H1 (cell line): ENCODE measurements at regions of chr1 and their contacts with region 1.

Region 1: DNA sequence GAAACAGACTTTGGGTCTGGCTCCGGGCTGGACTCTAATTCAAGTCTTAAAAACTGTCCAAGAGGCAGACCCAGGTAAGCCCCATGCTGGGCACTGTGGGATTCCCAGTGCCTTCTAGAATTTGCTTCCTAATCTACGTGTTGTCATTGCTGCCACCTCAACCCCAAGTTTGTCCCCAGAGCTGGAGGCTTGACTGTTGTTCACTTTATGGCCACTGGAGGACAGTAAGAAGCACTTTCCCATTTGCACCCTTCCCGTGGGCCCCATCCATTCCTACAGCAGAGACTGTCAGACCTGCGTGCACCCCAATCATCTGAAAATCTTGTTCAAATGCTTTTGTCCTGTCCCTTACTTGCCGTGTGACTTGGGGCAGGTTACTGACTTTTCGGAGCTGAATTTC is 29.4 kb upstream of the VASH2 start:
- DNase-seq: peak in 1 of 2 experiments; percentile 51
- H3K4me3 ChIP-seq: no peak overlapping the region
- H3K27ac ChIP-seq: no peak overlapping the region
- H3K4me1 ChIP-seq: peaks cover 1 to 15% (median 10%) of the 10 kb centered on the region in 4 experiments
- H3K27me3 ChIP-seq: no peaks in the 10 kb centered on the region
- CTCF ChIP-seq: peak; percentile 52 to 78 (median 58)
- EP300 ChIP-seq: no peak
- POLR2A ChIP-seq: no peak
- RAD21 ChIP-seq: peak; percentile 59 to 70

Region 2: GRCh38 chr1:212899845-212900244 is 21.1 kb before region 1 on chr1:
- CTCF ChIA-PET with region 1: interaction called, 11 read pairs
- POLR2A ChIA-PET with region 1: interaction called, 94 read pairs
- DNase-seq: no peak
- H3K4me3 ChIP-seq: no peak overlapping the region
- H3K27ac ChIP-seq: peak overlapping the region; percentile 8; the same call in 1 of the 2 replicates
- H3K4me1 ChIP-seq: peaks cover 3 to 9% (median 4%) of the 10 kb centered on the region in 4 experiments; a peak in 5 of 7 replicates
- H3K27me3 ChIP-seq: no peaks in the 10 kb centered on the region
- CTCF ChIP-seq: no peak
- EP300 ChIP-seq: no peak
- POLR2A ChIP-seq: no peak; a peak in 1 of 3 replicates
- RAD21 ChIP-seq: no peak

Region 3: GRCh38 chr1:212909652-212910063 is 11.2 kb before region 1 on chr1:
- CTCF ChIA-PET with region 1: interaction called, 6 read pairs
- POLR2A ChIA-PET with region 1: interaction called, 40 read pairs
- DNase-seq: peak in 1 of 2 experiments; percentile 73
- H3K4me3 ChIP-seq: peak overlapping the region in 3 of 4 experiments; percentile 3 to 49 (median 13); a peak in 4 of 8 replicates
- H3K27ac ChIP-seq: peak overlapping the region; percentile 91
- H3K4me1 ChIP-seq: peaks cover 5 to 18% (median 14%) of the 10 kb centered on the region in 4 experiments; a peak in 6 of 7 replicates
- H3K27me3 ChIP-seq: no peaks in the 10 kb centered on the region
- CTCF ChIP-seq: no peak
- EP300 ChIP-seq: no peak
- POLR2A ChIP-seq: peak in 1 of 2 experiments; percentile 44; a peak in 1 of 3 replicates
- RAD21 ChIP-seq: no peak

Region 4: GRCh38 chr1:212933815-212934471 is 13.0 kb after region 1 on chr1:
- CTCF ChIA-PET with region 1: interaction called, 10 read pairs
- POLR2A ChIA-PET with region 1: interaction called, 17 read pairs
- DNase-seq: peak in 1 of 2 experiments; percentile 39
- H3K4me3 ChIP-seq: no peak overlapping the region
- H3K27ac ChIP-seq: no peak overlapping the region
- H3K4me1 ChIP-seq: peaks cover 3 to 14% (median 6%) of the 10 kb centered on the region in 4 experiments
- H3K27me3 ChIP-seq: peaks cover 0 to 2% (median 0%) of the 10 kb centered on the region in 4 experiments; a peak in 1 of 7 replicates
- CTCF ChIP-seq: no peak
- EP300 ChIP-seq: no peak
- POLR2A ChIP-seq: no peak
- RAD21 ChIP-seq: no peak

Region 5: GRCh38 chr1:212950243-212951125 is 29.6 kb after region 1 on chr1 and contains the start of gene VASH2:
- CTCF ChIA-PET with region 1: interaction called, 22 read pairs
- POLR2A ChIA-PET with region 1: interaction called, 13 read pairs
- DNase-seq: peak; percentile 47 to 89
- H3K4me3 ChIP-seq: peak within 1 kb of the TSS; percentile 55 to 95 (median 94)
- H3K27ac ChIP-seq: no peak within 1 kb of the TSS
- H3K4me1 ChIP-seq: peaks cover 3 to 15% (median 11%) of the 10 kb centered on the region in 4 experiments
- H3K27me3 ChIP-seq: peaks cover 0 to 4% (median 0%) of the 10 kb centered on the region in 4 experiments; a peak in 1 of 7 replicates
- CTCF ChIP-seq: no peak
- EP300 ChIP-seq: no peak
- POLR2A ChIP-seq: peak in 1 of 2 experiments; percentile 31; a peak in 1 of 3 replicates
- RAD21 ChIP-seq: no peak
- total RNA-seq, gene VASH2: 184 and 187 TPM in 2 replicates